Dorsolateral prefrontal cortex (tissue), 120 donors: ENCODE measurements at regions of chr1 and their contacts with region 1.

Region 1: DNA sequence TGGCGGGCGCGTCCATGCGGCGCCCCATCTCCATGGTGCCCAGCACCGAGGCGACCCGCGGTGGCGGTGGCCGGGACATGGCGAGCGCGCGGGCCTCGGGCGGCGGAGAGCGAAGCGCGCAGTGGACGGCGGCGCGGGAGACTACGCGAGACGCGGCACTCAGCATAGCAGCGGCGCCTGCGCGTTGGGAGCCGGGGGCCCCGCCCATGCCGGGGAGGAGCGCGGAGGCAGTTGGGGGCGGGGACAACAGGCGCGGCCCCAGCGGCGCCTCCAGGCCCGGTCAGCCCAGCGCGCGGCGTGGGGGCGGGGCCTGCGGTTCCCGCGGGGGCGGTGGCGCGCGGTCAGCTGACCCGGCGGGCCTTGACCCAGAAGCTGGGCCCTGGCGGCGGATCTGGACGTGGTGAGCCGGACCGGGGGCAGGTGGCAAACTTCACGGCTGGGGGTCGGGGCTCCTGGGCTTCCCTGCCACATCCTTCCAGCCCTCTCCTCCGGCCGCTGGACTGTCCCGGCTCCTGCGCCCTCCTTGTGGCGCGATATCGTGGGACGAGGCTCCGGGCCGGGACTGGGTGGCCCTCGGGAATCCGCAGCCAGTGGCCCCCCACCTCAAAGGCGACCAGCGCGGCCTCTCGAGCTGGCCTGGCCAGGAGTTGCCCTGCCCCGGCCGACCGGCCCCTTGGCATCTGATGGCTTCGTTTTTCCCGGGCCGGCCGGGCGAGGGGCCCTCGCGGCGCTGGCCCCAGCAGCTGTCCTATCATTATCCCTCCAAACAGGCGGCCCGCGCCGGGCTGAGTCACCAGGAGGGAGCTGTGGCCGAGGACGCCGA is at the starts of genes AKR7A2 and SLC66A1:
- DNase-seq: peak; percentile 78 to 97 (median 90)
- H3K4me3 ChIP-seq: peak within 1 kb of the TSS; percentile 61 to 99 (median 93)
- H3K27ac ChIP-seq: peak within 1 kb of the TSS; percentile 26 to 96 (median 90)
- H3K27me3 ChIP-seq: no peaks in the 10 kb centered on the region
- CTCF ChIP-seq: peak in 40 of 56 donors; percentile 12 to 65 (median 39)
- total RNA-seq, gene AKR7A2: 30.7 to 80.6 (median 48.3) TPM
- total RNA-seq, gene SLC66A1: 12.9 to 28.8 (median 19.2) TPM

Region 2: GRCh38 chr1:18890711-18891425 is 421.3 kb before region 1 on chr1:
- intact Hi-C with region 1: loop called in 1 of 2 experiments (anchors 10 kb)
- DNase-seq: no peak
- H3K4me3 ChIP-seq: no peak overlapping the region
- H3K27ac ChIP-seq: peak overlapping the region in 28 of 59 donors; percentile 3 to 71 (median 37)
- H3K27me3 ChIP-seq: no peaks in the 10 kb centered on the region
- CTCF ChIP-seq: no peak

Region 3: GRCh38 chr1:19209990-19210771 is 102.0 kb before region 1 on chr1 and contains the start of gene UBR4:
- intact Hi-C with region 1: loop called in 1 of 2 experiments (anchors 5 kb)
- DNase-seq: peak; percentile 86 to 96 (median 92)
- H3K4me3 ChIP-seq: peak within 1 kb of the TSS; percentile 72 to 100 (median 93)
- H3K27ac ChIP-seq: peak within 1 kb of the TSS; percentile 43 to 98 (median 90)
- H3K27me3 ChIP-seq: no peaks in the 10 kb centered on the region
- CTCF ChIP-seq: peak in 33 of 56 donors; percentile 4 to 58 (median 25)
- total RNA-seq, gene UBR4: 143 to 247 (median 184) TPM

Region 4: GRCh38 chr1:19251305-19252196 is 60.6 kb before region 1 on chr1 and contains the starts of genes EMC1 and MRTO4:
- intact Hi-C with region 1: loop called (anchors 2 kb)
- DNase-seq: peak; percentile 81 to 94 (median 91)
- H3K4me3 ChIP-seq: peak within 1 kb of the TSS; percentile 45 to 100 (median 92)
- H3K27ac ChIP-seq: peak within 1 kb of the TSS; percentile 80 to 100 (median 99)
- H3K27me3 ChIP-seq: no peaks in the 10 kb centered on the region
- CTCF ChIP-seq: peak in 35 of 56 donors; percentile 5 to 54 (median 28)
- total RNA-seq, gene EMC1: 58.6 to 120 (median 88.1) TPM
- total RNA-seq, gene MRTO4: 18.3 to 47.2 (median 30.0) TPM

Region 5: DNA sequence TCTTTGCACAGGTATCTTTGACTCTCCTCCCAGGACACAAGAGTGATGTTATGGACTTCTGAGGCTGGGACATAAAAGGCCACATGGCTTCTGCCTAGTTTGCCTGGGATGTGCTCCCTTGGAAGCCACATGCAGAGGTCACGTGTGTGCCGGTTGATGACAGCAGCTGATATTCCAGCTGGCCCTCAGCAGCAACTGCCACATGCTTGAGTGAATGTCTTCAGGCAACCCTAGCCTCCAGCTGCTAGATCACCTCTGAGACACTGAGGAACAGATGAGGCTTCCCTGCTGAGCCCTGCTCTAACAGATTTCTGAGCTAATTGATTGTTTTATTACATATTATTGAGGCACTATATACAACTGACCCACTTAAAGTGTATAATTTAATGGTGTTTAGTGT is 12.0 kb before region 1 on chr1:
- intact Hi-C with region 1: no loop called
- DNase-seq: no peak
- H3K4me3 ChIP-seq: no peak overlapping the region
- H3K27ac ChIP-seq: no peak overlapping the region
- H3K27me3 ChIP-seq: no peaks in the 10 kb centered on the region
- CTCF ChIP-seq: no peak

Region 6: GRCh38 chr1:19596714-19597495 is 284.7 kb after region 1 on chr1:
- intact Hi-C with region 1: loop called in 1 of 2 experiments (anchors 2 kb)
- DNase-seq: peak; percentile 87 to 98 (median 96)
- H3K4me3 ChIP-seq: peak overlapping the region; percentile 73 to 100 (median 95)
- H3K27ac ChIP-seq: peak overlapping the region in 58 of 59 donors; percentile 60 to 97 (median 87)
- H3K27me3 ChIP-seq: no peaks in the 10 kb centered on the region
- CTCF ChIP-seq: peak in 12 of 56 donors; percentile 7 to 36 (median 22)